ENCODE measurements at regions of chr15 and their contacts with region 1.

Region 1: GRCh38 chr15:60390871-60391501 is 6.8 kb downstream of the ANXA2 start:
- DNase-seq: peak; percentile 81
- H3K4me3 Mint-ChIP-seq: peak overlapping the region; percentile 86
- H3K27ac Mint-ChIP-seq: peak overlapping the region; percentile 90
- H3K4me1 Mint-ChIP-seq: peaks cover 80% of the 10 kb centered on the region
- H3K27me3 Mint-ChIP-seq: no peaks in the 10 kb centered on the region
- CTCF ChIP-seq: no peak

Region 2: DNA sequence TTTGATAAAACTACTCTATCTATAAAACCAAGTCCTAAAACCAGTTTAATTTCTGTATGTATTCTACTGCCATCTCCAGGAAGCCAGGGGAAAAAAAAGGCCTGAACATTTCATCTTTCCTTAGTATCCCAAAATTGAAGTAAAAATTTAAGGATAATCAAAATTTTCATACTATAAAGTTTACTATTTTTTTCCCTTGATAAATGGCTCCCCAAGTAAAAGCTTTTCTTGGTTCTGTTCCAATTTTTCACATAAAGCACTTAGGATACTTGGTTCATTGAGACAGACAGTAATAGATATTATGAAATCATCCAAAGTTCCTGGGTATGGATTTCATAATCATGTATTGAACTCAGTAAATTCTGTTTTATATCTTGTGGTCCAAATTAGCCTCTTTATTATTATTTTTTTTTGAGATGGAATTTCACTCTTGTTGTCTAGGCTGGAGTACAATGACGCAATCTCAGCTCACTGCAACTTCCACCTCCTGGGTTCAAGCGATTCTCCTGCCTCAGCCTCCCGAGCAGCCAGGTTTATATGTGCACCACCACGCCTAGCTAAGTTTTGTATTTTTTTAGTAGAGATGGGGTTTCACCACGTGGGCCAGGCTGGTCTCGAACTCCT is 53.4 kb after region 1 on chr15:
- CTCF ChIA-PET with region 1: interaction called, 4 read pairs
- intact Hi-C with region 1: loop called (anchors 2 kb)
- DNase-seq: peak; percentile 13
- H3K4me3 Mint-ChIP-seq: no peak overlapping the region
- H3K27ac Mint-ChIP-seq: peak overlapping the region; percentile 12
- H3K4me1 Mint-ChIP-seq: peaks cover 16% of the 10 kb centered on the region
- H3K27me3 Mint-ChIP-seq: no peaks in the 10 kb centered on the region
- CTCF ChIP-seq: peak; percentile 17

Region 3: GRCh38 chr15:60557191-60557618 is 166.2 kb after region 1 on chr15:
- CTCF ChIA-PET with region 1: no interaction called
- intact Hi-C with region 1: no loop called
- DNase-seq: no peak
- H3K4me3 Mint-ChIP-seq: no peak overlapping the region
- H3K27ac Mint-ChIP-seq: no peak overlapping the region
- H3K4me1 Mint-ChIP-seq: peaks cover 7% of the 10 kb centered on the region
- H3K27me3 Mint-ChIP-seq: no peaks in the 10 kb centered on the region
- CTCF ChIP-seq: no peak

Measured in Calu3 (cell line).